Naive thymus-derived CD4-positive, alpha-beta T cell (primary cell): ENCODE measurements at regions of chr20 and their contacts with region 1.

Region 1: GRCh38 chr20:63495741-63496595 is 2.9 kb downstream of the EEF1A2 start:
- DNase-seq: peak; percentile 43 to 82 (median 71)
- ATAC-seq: peak; percentile 72
- H3K4me3 ChIP-seq: no peak overlapping the region
- H3K4me3 Mint-ChIP-seq: peak overlapping the region; percentile 41 to 75 (median 66)
- H3K27ac ChIP-seq: no peak overlapping the region
- H3K27ac Mint-ChIP-seq: no peak overlapping the region
- H3K4me1 ChIP-seq: peaks cover 0 to 2% of the 10 kb centered on the region in 2 donors
- H3K4me1 Mint-ChIP-seq: peaks cover 0 to 4% (median 0%) of the 10 kb centered on the region in 7 donors
- H3K27me3 ChIP-seq: no peaks in the 10 kb centered on the region
- H3K27me3 Mint-ChIP-seq: peaks cover 0 to 28% (median 8%) of the 10 kb centered on the region in 5 donors

Region 2: DNA sequence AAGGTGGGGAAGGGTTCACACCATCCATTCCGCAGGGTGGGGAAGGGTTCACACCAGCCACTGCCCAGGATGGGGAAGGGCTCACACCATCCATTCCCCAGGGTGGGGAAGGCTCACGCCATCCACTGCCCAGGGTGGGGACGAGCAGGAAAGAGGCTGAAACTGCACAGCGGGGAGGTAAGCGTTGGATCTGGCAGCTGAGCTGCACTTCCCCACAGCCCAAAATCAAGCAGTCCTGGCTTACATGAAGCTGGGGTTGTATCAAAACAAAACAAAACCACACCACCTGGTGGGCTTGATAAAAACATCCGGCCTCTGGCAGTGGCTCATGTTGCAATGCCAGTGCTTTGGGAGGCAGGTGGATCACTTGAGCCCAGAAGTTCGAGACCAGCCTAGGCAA is 1698.8 kb before region 1 on chr20:
- CTCF ChIA-PET with region 1: no interaction called
- POLR2A ChIA-PET with region 1: no interaction called
- intact Hi-C with region 1: no loop called
- DNase-seq: no peak
- ATAC-seq: no peak
- H3K4me3 ChIP-seq: no peak overlapping the region
- H3K4me3 Mint-ChIP-seq: no peak overlapping the region
- H3K27ac ChIP-seq: no peak overlapping the region
- H3K27ac Mint-ChIP-seq: no peak overlapping the region
- H3K4me1 ChIP-seq: no peaks in the 10 kb centered on the region
- H3K4me1 Mint-ChIP-seq: peaks cover 0 to 5% (median 0%) of the 10 kb centered on the region in 7 donors
- H3K27me3 ChIP-seq: no peaks in the 10 kb centered on the region
- H3K27me3 Mint-ChIP-seq: peaks cover 0 to 26% (median 2%) of the 10 kb centered on the region in 5 donors

Region 3: GRCh38 chr20:63520504-63520933 is 24.6 kb after region 1 on chr20 and contains the start of gene PPDPF:
- CTCF ChIA-PET with region 1: interaction called, 8 read pairs
- POLR2A ChIA-PET with region 1: interaction called, 22 read pairs
- intact Hi-C with region 1: loop called (anchors 1 kb)
- DNase-seq: peak; percentile 76 to 92 (median 84)
- ATAC-seq: peak; percentile 96
- H3K4me3 ChIP-seq: peak within 1 kb of the TSS; percentile 86
- H3K4me3 Mint-ChIP-seq: peak within 1 kb of the TSS; percentile 65 to 89 (median 81)
- H3K27ac ChIP-seq: peak within 1 kb of the TSS; percentile 88
- H3K27ac Mint-ChIP-seq: peak within 1 kb of the TSS in 7 of 9 donors; percentile 51 to 88 (median 79)
- H3K4me1 ChIP-seq: peaks cover 11 to 14% of the 10 kb centered on the region in 2 donors
- H3K4me1 Mint-ChIP-seq: peaks cover 4 to 22% (median 9%) of the 10 kb centered on the region in 7 donors
- H3K27me3 ChIP-seq: no peaks in the 10 kb centered on the region
- H3K27me3 Mint-ChIP-seq: peaks cover 0 to 7% (median 0%) of the 10 kb centered on the region in 5 donors
- total RNA-seq, gene PPDPF: 138 to 225 (median 184) TPM